Heart left ventricle (tissue), 16 donors: ENCODE measurements at regions of chr21 and their contacts with region 1.

Region 1: GRCh38 chr21:46219591-46220239 is 8.9 kb downstream of the LSS start:
- DNase-seq: peak in 2 of 5 donors; percentile 64 to 72
- ATAC-seq: peak; percentile 14 to 60 (median 24)
- H3K4me3 ChIP-seq: no peak overlapping the region
- H3K27ac ChIP-seq: no peak overlapping the region
- H3K4me1 ChIP-seq: peaks cover 0 to 37% (median 9%) of the 10 kb centered on the region in 12 donors
- H3K27me3 ChIP-seq: no peaks in the 10 kb centered on the region
- CTCF ChIP-seq: no peak
- POLR2A ChIP-seq: no peak

Region 2: GRCh38 chr21:46159841-46160656 is 59.7 kb before region 1 on chr21:
- intact Hi-C with region 1: loop called in 2 of 10 experiments (anchors 5 to 10 kb)
- DNase-seq: peak in 3 of 5 donors; percentile 4 to 20 (median 14)
- ATAC-seq: no peak
- H3K4me3 ChIP-seq: no peak overlapping the region
- H3K27ac ChIP-seq: no peak overlapping the region
- H3K4me1 ChIP-seq: no peaks in the 10 kb centered on the region
- H3K27me3 ChIP-seq: peaks cover 0 to 9% (median 0%) of the 10 kb centered on the region in 9 donors
- CTCF ChIP-seq: no peak
- POLR2A ChIP-seq: no peak

Region 3: GRCh38 chr21:46184625-46185555 is 34.8 kb before region 1 on chr21:
- intact Hi-C with region 1: loop called in 2 of 10 experiments (anchors 5 kb)
- DNase-seq: peak; percentile 77 to 94 (median 92)
- ATAC-seq: peak; percentile 59 to 76 (median 65)
- H3K4me3 ChIP-seq: peak overlapping the region; percentile 32 to 93 (median 66)
- H3K27ac ChIP-seq: peak overlapping the region; percentile 72 to 97 (median 88)
- H3K4me1 ChIP-seq: peaks cover 6 to 45% (median 22%) of the 10 kb centered on the region in 12 donors
- H3K27me3 ChIP-seq: no peaks in the 10 kb centered on the region
- CTCF ChIP-seq: no peak
- POLR2A ChIP-seq: no peak

Region 4: DNA sequence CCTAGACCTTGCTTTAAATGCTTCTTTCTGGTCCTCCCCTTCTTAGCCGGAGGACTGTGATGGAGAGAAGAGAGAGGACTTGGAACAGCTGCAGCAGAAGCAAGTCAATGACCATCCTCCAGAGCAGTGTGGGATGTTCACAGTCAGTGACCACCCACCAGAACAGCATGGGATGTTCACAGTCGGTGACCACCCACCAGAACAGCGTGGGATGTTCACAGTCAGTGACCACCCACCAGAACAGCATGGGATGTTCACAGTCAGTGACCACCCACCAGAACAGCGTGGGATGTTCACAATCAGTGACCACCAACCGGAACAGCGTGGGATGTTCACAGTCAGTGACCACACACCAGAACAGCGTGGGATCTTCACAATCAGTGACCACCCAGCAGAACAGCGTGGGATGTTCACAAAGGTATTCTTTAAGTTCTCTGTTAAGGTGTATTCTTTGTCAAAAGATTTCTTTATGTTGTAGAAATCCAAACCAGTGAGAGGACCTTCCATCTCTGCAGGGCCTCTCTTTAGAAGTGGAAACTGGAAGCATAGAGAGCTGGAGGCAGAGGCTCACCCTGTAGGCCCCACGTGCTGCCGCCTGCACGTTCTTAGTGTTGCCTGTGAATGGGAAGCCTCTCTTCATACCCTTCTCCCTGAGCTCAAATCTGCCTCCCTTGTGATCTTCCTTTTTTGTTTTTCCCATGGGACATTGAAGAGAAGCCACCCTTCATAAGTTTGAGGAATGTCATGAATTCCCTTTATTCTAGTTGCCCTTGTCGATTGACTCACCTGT is 114.8 kb after region 1 on chr21:
- intact Hi-C with region 1: no loop called
- DNase-seq: no peak
- ATAC-seq: no peak
- H3K4me3 ChIP-seq: no peak overlapping the region
- H3K27ac ChIP-seq: no peak overlapping the region
- H3K4me1 ChIP-seq: no peaks in the 10 kb centered on the region
- H3K27me3 ChIP-seq: no peaks in the 10 kb centered on the region
- CTCF ChIP-seq: no peak
- POLR2A ChIP-seq: no peak